Activated CD4-positive, alpha-beta T cell treated with anti-CD3 and anti-CD28 coated beads for 36 hours (primary cell): ENCODE measurements at regions of chr21 and their contacts with region 1.

Region 1: DNA sequence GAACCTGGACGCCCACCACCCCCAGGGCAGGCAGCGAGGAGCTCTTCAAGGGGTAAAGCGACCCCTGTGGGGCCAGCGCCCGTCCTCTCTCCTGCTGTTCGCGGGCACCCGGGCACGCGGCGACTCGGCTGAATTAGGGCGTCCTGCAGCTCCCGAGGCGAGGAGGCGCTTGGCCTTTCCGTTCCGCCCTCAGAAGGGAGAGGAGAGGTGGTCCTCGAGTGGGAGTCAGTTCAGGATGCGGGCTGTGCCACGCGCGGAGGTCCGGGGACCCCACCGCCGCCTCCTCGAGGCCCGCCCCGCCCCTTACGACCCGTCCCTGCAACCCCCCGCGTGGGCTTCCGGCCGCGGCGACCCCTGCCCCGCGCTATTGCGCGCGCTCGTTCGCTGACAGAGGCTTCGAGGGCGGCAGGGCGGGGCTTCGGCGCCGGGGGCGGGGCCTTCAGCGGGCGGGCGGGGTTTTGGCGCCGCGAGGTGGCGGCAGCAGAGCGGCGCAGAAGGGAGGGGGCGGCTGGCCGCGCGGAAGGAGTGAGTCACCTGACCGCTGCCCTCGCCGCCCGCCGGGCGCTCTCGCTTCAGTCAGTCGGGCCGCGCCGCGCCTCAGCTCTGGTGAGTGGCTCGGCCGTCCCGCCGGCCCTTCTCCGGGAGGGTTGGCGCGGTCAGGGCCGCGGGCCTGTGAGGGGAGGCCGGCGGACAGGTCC is at the start of gene BACH1:
- DNase-seq: peak; percentile 95
- ATAC-seq: peak; percentile 72
- H3K4me3 Mint-ChIP-seq: peak within 1 kb of the TSS; percentile 87
- H3K27ac Mint-ChIP-seq: peak within 1 kb of the TSS; percentile 96
- H3K4me1 Mint-ChIP-seq: peaks cover 62% of the 10 kb centered on the region
- H3K27me3 Mint-ChIP-seq: no peaks in the 10 kb centered on the region
- total RNA-seq, gene BACH1: 24.1 to 27.0 TPM

Region 2: DNA sequence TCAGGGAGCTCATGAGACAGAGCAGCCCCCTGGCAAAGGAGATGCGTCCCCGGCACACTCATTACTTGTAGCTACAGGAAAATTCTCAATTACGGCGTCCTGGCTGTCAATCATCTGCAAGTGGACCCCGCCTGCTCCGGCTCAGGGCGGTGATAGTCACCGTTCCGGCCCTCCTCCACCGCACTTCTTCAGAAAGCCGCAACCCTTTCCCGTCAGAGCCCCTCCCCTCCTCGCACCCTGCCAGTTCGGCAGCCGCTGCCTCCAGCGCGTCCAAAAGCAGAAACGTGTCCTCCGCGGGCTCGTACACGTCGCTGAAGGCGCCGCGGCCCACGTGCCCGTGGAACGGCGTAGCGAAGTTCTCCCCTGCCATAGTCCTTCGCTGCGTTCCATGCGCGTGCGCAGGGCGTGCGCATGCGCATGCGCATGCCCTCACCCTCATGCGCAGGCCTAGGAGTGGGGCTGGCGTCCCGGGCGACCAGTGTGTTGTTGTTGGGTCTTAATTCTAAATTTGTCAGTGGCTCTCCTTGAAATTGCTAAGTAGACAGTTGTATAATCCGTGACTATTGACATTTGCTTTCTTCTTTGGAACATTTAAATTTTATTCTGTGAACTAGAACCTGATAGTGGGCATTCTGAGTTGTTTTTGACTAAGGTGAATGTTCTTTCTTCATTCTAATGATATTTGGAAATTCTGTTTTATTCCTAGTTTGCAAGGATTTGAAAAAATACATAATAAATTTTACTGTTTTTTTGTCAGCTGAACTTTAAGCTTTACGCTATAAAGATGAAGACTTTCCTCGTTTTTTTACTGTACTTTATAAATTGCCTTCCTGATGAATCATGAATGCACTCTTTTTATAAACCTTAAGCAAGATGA is 413.3 kb before region 1 on chr21:
- CTCF ChIA-PET with region 1: no interaction called
- POLR2A ChIA-PET with region 1: no interaction called
- intact Hi-C with region 1: loop called in 1 of 2 experiments (anchors 1 kb)
- DNase-seq: peak; percentile 95
- ATAC-seq: peak; percentile 96
- H3K4me3 Mint-ChIP-seq: peak overlapping the region; percentile 86
- H3K27ac Mint-ChIP-seq: peak overlapping the region; percentile 99
- H3K4me1 Mint-ChIP-seq: peaks cover 16% of the 10 kb centered on the region
- H3K27me3 Mint-ChIP-seq: no peaks in the 10 kb centered on the region

Region 3: DNA sequence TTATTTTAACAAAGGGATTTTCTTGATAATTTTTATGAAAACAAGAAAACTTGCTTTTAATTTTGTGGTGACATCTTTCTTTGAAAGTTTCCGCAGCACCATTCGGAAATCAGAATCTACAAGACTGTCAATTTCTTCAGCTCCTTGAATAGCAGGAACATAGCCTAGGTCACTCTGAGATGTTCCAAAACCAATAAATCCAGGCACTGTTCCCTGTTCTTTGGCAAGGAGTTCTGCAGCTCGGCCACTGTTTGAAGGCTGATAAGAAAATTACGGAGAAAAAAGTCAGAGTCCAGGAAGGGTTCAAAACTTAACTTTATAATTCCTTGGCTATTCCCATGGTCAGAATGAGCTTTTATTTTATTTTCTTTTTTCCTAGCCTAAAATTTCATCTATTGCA is 311.8 kb before region 1 on chr21:
- CTCF ChIA-PET with region 1: no interaction called
- POLR2A ChIA-PET with region 1: no interaction called
- intact Hi-C with region 1: no loop called
- DNase-seq: no peak
- ATAC-seq: no peak
- H3K4me3 Mint-ChIP-seq: no peak overlapping the region
- H3K27ac Mint-ChIP-seq: no peak overlapping the region
- H3K4me1 Mint-ChIP-seq: peaks cover 38% of the 10 kb centered on the region
- H3K27me3 Mint-ChIP-seq: no peaks in the 10 kb centered on the region

Region 4: DNA sequence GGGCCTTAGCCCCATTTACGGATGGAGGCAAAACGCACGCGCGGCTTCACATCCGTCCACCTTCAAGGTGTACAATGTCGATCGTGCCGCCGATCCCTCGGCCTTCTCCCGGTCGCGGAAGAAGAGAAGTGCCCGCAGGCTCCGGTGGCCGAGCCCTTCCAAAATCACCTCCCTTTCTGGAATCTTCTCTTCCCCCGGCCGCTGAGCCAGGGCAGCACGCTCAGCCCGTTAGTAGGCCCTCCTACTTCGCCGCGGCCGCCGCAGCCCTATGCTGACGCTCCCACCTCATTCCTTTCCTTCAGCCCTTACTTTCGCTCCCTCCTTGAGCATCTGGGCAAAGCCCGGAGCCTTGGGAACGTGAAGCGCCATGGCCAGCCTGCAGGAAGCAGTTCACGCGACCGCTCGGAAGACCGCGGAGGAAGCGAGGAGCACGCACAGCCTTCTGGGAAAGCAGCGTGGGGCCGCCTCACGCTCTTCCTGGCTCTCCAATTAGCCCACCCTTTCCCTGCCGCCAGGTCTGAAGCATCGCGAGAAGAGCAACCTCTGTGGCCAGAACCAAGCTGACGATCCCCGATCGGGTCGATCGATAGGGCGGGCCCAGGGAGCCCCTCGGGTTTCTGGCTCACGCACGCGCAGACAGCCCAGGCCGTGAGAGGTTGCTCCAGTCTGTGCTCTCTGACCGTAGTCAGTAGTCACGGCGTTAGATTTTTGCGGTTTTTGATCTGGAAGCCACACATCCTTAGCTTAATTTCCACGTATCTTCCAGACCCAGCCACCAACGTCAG is 225.1 kb before region 1 on chr21 and contains the start of gene CCT8:
- CTCF ChIA-PET with region 1: interaction called, 9 read pairs
- POLR2A ChIA-PET with region 1: interaction called, 9 read pairs
- intact Hi-C with region 1: loop called (anchors 1 kb)
- DNase-seq: peak; percentile 99
- ATAC-seq: peak; percentile 91
- H3K4me3 Mint-ChIP-seq: peak within 1 kb of the TSS; percentile 100
- H3K27ac Mint-ChIP-seq: peak within 1 kb of the TSS; percentile 100
- H3K4me1 Mint-ChIP-seq: peaks cover 47% of the 10 kb centered on the region
- H3K27me3 Mint-ChIP-seq: no peaks in the 10 kb centered on the region
- total RNA-seq, gene CCT8: 465 to 572 TPM

Region 5: DNA sequence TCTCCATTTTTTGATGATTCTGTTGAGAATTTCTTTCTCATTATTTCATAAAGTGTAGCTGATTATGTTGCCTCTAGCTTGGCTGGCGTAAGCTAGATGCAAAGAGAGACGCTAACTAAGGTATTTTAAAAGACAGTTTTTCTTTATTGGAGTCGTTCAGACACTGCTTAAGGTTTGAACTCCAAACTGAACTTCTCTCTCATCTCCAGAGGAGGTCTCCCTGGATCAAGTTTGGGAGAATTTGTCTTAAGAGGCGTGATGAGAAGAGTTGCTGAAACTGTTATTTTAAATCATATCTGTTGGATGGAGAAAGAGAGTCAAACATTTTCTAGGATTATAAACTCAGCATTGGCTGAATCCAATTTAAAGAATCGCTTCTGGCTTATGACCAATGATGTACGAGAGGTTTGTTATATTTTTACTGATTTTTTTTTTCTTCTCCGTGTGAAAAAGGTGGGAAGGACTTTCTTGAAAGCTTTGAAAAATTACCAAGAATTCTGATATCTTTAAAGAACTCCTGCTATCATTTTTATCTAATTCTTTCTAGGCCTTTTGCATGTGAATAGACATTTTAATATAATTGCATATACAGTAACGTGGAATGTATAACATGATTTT is 134.1 kb before region 1 on chr21:
- CTCF ChIA-PET with region 1: interaction called, 10 read pairs
- POLR2A ChIA-PET with region 1: interaction called, 3 read pairs
- intact Hi-C with region 1: no loop called
- DNase-seq: no peak
- ATAC-seq: peak; percentile 44
- H3K4me3 Mint-ChIP-seq: no peak overlapping the region
- H3K27ac Mint-ChIP-seq: no peak overlapping the region
- H3K4me1 Mint-ChIP-seq: no peaks in the 10 kb centered on the region
- H3K27me3 Mint-ChIP-seq: no peaks in the 10 kb centered on the region

Region 6: DNA sequence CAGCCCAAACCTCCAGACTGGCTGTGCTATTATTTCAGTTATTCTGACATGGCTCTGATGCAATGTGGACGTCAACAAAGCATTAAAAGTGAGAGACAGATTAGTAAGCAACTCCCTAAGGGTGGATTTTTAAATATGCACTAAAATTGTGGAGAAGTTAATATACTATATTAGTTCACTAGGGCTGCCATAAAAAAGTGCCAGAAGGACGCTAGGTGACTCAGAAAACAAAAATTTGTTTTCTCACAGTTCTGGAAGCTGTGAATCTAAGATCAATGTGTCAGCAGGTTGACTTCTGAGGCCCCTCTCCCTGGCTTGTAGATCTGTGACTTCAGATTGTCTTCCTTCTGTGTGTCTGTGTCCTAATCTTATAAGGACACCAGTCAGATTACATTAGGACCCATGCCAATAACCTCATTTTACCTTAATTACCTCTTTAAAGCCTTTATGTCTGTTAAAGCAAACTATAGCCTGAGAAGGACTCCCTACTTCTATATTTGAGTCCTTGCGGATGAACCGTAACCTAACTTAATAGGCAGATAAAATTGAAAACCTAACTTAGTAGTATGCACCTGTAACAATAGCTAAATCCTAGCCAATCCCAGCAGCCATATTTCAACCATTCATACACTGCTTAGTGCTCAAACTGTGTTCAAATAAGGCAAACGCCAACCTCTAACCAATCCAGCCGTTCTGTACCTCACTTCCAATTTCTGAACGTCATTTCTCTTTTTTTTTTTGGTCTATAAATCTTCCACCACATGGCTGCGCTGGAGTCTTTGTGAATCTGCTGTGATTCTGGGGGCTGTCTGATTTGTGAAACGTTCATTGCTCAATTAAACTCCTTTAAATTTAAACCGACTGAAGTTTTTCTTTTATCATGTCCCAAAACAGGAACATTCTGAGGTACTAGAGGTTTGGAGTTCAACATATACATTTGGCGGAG is 65.6 kb before region 1 on chr21:
- CTCF ChIA-PET with region 1: interaction called, 9 read pairs
- POLR2A ChIA-PET with region 1: interaction called, 23 read pairs
- intact Hi-C with region 1: loop called (anchors 1 to 2 kb)
- DNase-seq: no peak
- ATAC-seq: peak; percentile 8
- H3K4me3 Mint-ChIP-seq: no peak overlapping the region
- H3K27ac Mint-ChIP-seq: peak overlapping the region; percentile 76
- H3K4me1 Mint-ChIP-seq: peaks cover 49% of the 10 kb centered on the region
- H3K27me3 Mint-ChIP-seq: peaks cover 5% of the 10 kb centered on the region

Region 7: GRCh38 chr21:29318354-29318753 is 19.9 kb after region 1 on chr21:
- CTCF ChIA-PET with region 1: interaction called, 7 read pairs
- POLR2A ChIA-PET with region 1: interaction called, 11 read pairs
- intact Hi-C with region 1: no loop called
- DNase-seq: no peak
- ATAC-seq: no peak
- H3K4me3 Mint-ChIP-seq: no peak overlapping the region
- H3K27ac Mint-ChIP-seq: no peak overlapping the region
- H3K4me1 Mint-ChIP-seq: peaks cover 36% of the 10 kb centered on the region
- H3K27me3 Mint-ChIP-seq: no peaks in the 10 kb centered on the region

Region 8: DNA sequence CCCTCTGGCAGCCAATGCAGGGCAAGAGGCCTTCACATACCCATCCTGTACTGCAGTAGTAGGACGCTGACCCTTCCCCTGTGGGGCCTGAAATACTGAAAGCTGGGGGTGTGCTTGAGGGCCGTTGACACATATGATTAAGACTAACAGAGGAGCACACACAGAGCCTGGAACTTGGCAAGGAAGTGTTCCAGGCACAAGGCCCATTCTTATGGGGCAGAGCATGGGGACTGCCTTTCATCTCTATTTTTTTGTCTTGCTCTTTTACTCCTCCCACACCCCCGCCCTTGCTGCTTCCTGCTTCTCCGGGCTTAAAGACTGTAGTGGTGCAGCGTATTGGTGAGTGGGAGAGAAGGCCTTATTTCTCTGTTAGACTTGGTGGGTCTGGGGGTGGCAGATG is 137.6 kb after region 1 on chr21:
- CTCF ChIA-PET with region 1: no interaction called
- POLR2A ChIA-PET with region 1: no interaction called
- intact Hi-C with region 1: loop called in 1 of 2 experiments (anchors 1 kb)
- DNase-seq: peak; percentile 75
- ATAC-seq: peak; percentile 80
- H3K4me3 Mint-ChIP-seq: peak overlapping the region; percentile 73
- H3K27ac Mint-ChIP-seq: peak overlapping the region; percentile 91
- H3K4me1 Mint-ChIP-seq: peaks cover 46% of the 10 kb centered on the region
- H3K27me3 Mint-ChIP-seq: no peaks in the 10 kb centered on the region